ENCODE measurements at regions of chr19 and their contacts with region 1.

Region 1: GRCh38 chr19:43934985-43935708 is at the start of gene ZNF45:
- H3K4me3 Mint-ChIP-seq: peak within 1 kb of the TSS; percentile 89
- H3K27ac Mint-ChIP-seq: peak within 1 kb of the TSS; percentile 93
- H3K4me1 Mint-ChIP-seq: peaks cover 19% of the 10 kb centered on the region
- H3K27me3 Mint-ChIP-seq: peaks cover 5% of the 10 kb centered on the region

Region 2: DNA sequence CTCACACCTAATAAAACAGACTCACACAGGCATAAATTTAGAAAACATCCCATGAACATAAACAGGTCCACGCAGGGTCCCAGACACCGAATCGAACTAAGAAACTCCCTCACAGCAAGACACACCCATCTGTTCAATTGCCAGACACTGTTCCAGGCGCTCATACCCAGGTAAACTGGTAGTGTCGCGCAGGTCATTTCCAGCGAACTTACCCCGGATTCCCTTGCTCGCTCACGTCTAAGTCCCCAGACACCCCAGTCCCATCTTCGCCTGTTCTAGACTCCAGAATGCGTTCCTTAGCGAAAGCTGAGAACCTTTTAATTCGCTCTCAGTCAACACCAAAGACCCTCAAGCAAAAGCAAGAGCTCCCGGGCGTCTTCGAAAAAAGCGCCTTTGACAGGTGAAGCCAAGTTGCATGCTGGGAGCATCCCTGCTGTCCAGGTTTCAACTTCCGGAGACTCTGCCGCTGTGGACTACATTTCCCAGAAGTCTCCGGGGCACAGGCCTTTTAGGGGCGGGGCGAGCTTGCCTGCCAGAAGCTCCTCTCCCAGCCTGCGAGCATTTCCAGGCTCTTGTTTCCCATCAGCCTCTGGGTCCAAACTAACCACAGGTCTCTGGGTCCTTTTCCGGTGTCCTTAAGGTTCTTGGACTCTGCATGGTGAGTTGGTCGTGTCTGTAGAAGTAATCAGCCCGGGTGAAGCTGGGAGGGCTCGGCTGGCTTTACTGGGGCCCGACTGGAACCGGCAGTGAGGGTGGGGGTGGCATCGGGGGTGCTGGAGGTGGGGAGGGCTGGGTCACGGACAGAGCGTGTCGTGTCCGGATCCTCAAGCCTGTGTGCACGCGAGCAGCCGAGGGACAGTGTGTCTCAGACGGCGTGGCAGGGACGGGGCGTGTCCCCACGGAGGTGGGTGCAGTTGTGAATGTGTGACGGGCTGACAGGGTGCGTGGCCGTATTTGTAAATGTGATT is 108.1 kb before region 1 on chr19 and contains the start of gene ZNF283:
- intact Hi-C with region 1: loop called (anchors 5 kb)
- H3K4me3 Mint-ChIP-seq: peak within 1 kb of the TSS; percentile 85
- H3K27ac Mint-ChIP-seq: peak within 1 kb of the TSS; percentile 87
- H3K4me1 Mint-ChIP-seq: peaks cover 17% of the 10 kb centered on the region
- H3K27me3 Mint-ChIP-seq: peaks cover 31% of the 10 kb centered on the region

Region 3: GRCh38 chr19:43901395-43902390 is 33.5 kb before region 1 on chr19:
- intact Hi-C with region 1: loop called (anchors 1 kb)
- H3K4me3 Mint-ChIP-seq: peak overlapping the region; percentile 83
- H3K27ac Mint-ChIP-seq: peak overlapping the region; percentile 81
- H3K4me1 Mint-ChIP-seq: peaks cover 14% of the 10 kb centered on the region
- H3K27me3 Mint-ChIP-seq: peaks cover 4% of the 10 kb centered on the region

Region 4: GRCh38 chr19:43950834-43951645 is 15.9 kb after region 1 on chr19 and contains the start of gene ZNF221:
- intact Hi-C with region 1: loop called (anchors 1 kb)
- H3K4me3 Mint-ChIP-seq: peak within 1 kb of the TSS; percentile 99
- H3K27ac Mint-ChIP-seq: peak within 1 kb of the TSS; percentile 92
- H3K4me1 Mint-ChIP-seq: peaks cover 8% of the 10 kb centered on the region
- H3K27me3 Mint-ChIP-seq: peaks cover 13% of the 10 kb centered on the region

Region 5: GRCh38 chr19:43983912-43984686 is 49.0 kb after region 1 on chr19 and contains the start of gene ZNF155:
- intact Hi-C with region 1: loop called (anchors 1 kb)
- H3K4me3 Mint-ChIP-seq: peak within 1 kb of the TSS; percentile 90
- H3K27ac Mint-ChIP-seq: peak within 1 kb of the TSS; percentile 88
- H3K4me1 Mint-ChIP-seq: peaks cover 5% of the 10 kb centered on the region
- H3K27me3 Mint-ChIP-seq: no peaks in the 10 kb centered on the region

Measured in dendritic cell treated with granulocyte-macrophage colony-stimulating factor and Interleukin-4, amounts not matched to agents 40 ng/mL and 50 ng/mL, for 4 days (primary cell).